Mammary epithelial cell (primary cell): ENCODE measurements at regions of chr18 and their contacts with region 1.

Region 1: GRCh38 chr18:47150029-47150823 is at the start of gene HDHD2:
- DNase-seq: peak; percentile 80
- H3K4me3 ChIP-seq: peak within 1 kb of the TSS; percentile 84 to 94 (median 92)
- H3K27ac ChIP-seq: peak within 1 kb of the TSS; percentile 69
- H3K4me1 ChIP-seq: peaks cover 5% of the 10 kb centered on the region
- H3K27me3 ChIP-seq: no peaks in the 10 kb centered on the region
- CTCF ChIP-seq: no peak
- total RNA-seq, gene HDHD2: 18.3 to 28.6 TPM

Region 2: GRCh38 chr18:47163241-47163640 is 13.0 kb after region 1 on chr18:
- CTCF ChIA-PET with region 1: interaction called, 6 read pairs
- dilution Hi-C with region 1: no loop called
- in situ Hi-C with region 1: no loop called
- intact Hi-C with region 1: loop called (anchors 2 kb)
- DNase-seq: peak; percentile 91
- H3K4me3 ChIP-seq: no peak overlapping the region
- H3K27ac ChIP-seq: peak overlapping the region; percentile 83
- H3K4me1 ChIP-seq: peaks cover 9% of the 10 kb centered on the region
- H3K27me3 ChIP-seq: no peaks in the 10 kb centered on the region
- CTCF ChIP-seq: no peak

Region 3: DNA sequence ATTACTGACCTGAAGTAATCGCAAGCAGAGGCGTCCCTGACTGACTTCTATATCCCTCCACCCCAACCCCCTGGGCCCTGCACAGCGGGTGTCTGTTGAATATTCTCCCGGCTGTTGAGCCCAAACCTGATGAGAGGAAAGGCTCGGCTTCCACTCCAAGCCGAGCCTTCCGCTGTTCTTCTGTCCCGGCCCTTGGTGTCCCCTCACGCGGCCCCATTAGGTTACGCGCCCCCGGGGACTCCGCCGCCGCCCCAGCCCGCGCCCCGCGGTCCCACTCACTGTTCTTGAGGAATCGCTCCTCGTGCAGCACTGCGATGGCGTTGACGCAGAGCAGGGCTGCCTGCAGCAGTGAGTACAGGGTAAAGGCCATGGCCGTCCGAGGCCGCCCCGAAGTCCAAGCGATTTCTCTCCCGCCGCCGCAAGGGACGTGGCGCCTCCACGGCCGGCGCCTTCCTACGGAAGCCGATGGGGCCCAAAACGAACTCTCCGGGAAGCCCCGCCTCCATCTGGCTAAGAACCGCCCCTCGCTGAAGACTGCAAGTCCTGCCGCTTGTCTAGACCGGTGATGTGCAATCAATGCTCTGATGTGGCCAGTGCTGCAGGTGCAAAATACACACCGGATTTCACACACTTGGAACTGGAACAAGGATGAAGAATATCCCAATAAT is 25.8 kb after region 1 on chr18 and contains the start of gene IER3IP1:
- CTCF ChIA-PET with region 1: no interaction called
- dilution Hi-C with region 1: no loop called
- in situ Hi-C with region 1: no loop called
- intact Hi-C with region 1: loop called (anchors 1 kb)
- DNase-seq: peak; percentile 86
- H3K4me3 ChIP-seq: peak within 1 kb of the TSS; percentile 87 to 100 (median 95)
- H3K27ac ChIP-seq: peak within 1 kb of the TSS; percentile 87
- H3K4me1 ChIP-seq: peaks cover 7% of the 10 kb centered on the region
- H3K27me3 ChIP-seq: no peaks in the 10 kb centered on the region
- CTCF ChIP-seq: no peak
- total RNA-seq, gene IER3IP1: 13.2 to 15.2 TPM